ENCODE measurements at regions of chr12 and their contacts with region 1.

Region 1: GRCh38 chr12:68866950-68867349 is 59.0 kb downstream of the MDM2 start:
- DNase-seq: no peak
- H3K4me3 ChIP-seq: no peak overlapping the region
- H3K27ac ChIP-seq: no peak overlapping the region
- H3K4me1 ChIP-seq: no peaks in the 10 kb centered on the region
- H3K27me3 ChIP-seq: peaks cover 4% of the 10 kb centered on the region
- CTCF ChIP-seq: no peak

Region 2: DNA sequence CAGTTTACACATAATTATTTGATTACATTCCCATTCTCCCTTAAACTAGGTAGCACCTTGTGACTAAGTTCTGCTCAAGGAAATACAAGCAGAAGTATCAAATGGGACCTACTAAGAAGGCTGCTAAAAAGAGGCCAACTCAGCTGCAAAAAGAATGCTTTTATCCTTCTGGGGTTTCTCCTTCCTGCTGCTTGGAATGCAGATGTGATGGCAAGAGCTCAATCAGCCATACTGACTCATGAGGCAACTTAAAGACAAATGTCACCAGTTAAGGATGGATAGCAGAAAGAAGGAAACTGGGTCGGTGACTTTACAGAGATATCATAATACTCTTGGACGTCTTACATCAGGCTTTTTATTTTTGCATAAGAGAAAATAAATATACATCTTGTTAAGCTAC is 294.3 kb before region 1 on chr12:
- intact Hi-C with region 1: no loop called
- DNase-seq: no peak
- H3K4me3 ChIP-seq: no peak overlapping the region
- H3K27ac ChIP-seq: no peak overlapping the region
- H3K4me1 ChIP-seq: no peaks in the 10 kb centered on the region
- H3K27me3 ChIP-seq: no peaks in the 10 kb centered on the region
- CTCF ChIP-seq: no peak

Region 3: DNA sequence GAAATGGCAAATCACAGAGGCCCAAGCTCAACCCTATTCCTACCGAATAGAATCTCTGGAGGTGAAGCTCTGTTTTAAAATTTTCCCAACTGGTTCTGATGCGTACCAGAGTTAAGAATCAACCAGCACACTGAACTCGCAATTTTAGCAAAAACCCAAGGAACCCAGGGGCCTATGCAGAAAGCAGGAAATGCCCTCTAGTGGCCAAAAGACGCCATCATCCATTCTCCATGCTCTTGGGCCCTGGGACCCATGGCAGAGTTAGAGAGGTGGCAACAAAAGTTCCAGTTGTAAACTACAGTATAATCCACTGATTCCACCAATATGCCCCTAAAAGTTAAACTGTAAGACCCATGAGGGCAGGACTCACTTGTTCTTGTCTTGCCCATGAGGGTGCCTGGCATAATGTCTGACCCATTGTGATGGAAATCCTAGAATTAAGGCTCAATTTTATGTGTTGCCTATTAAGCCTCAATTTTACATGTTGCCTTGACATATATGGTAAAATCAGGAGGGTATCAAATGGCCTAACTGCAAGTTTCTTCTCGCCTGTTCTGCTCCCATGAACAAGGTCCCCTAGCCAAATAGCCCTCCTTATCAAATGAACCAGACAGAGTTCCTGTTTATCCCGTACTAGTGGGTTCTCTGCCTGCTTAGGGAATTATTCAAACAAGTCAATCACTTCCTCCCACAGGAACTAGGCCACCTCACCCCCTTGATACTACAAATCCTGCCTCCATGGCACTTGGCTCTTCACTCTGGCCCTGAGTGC is 203.6 kb after region 1 on chr12:
- intact Hi-C with region 1: loop called (anchors 10 kb)
- DNase-seq: peak; percentile 26
- H3K4me3 ChIP-seq: no peak overlapping the region
- H3K27ac ChIP-seq: no peak overlapping the region
- H3K4me1 ChIP-seq: peaks cover 13% of the 10 kb centered on the region
- H3K27me3 ChIP-seq: peaks cover under 1% of the 10 kb centered on the region
- CTCF ChIP-seq: peak; percentile 93